Naive thymus-derived CD4-positive, alpha-beta T cell (primary cell): ENCODE measurements at regions of chr2 and their contacts with region 1.

Region 1: DNA sequence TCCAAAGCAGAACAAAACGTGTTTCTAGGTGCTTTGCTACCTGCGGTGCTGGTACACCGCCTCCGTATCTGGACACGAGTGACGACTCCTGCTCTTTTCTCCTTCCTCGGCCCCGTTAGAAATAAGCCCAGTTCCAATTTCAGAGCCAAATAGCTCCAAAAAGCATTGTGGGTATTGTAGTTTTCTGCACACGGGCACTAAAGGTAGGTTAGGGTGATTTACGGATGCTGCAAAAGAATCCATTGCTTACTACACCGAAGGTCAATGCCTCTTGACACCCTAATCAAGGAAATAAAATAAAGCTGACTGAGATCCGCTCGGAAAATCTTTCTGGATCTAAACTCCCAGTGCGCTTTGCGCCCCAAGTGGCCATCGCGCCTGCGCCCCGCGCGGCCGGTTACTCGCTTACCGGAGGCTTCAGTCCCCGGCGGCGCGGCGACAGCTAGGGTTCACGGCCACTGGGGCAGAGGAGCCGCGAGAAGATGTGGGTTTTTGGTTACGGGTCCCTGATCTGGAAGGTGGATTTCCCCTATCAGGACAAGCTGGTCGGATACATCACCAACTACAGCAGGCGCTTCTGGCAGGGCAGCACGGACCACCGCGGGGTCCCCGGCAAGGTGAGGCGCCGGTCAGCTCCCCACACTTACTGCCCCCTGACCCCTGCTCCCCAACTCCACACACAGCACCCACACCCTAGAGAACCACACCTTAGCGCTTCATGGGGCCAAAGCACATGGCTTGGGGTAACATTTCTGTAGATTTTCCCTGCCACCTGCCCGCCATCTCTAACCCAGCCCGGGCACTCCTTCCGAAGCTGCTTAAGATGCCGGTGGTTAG is at the start of gene CHAC2:
- DNase-seq: peak; percentile 74 to 86 (median 84)
- ATAC-seq: peak; percentile 93
- H3K4me3 ChIP-seq: peak within 1 kb of the TSS; percentile 80
- H3K4me3 Mint-ChIP-seq: peak within 1 kb of the TSS; percentile 88 to 98 (median 92)
- H3K27ac ChIP-seq: peak within 1 kb of the TSS; percentile 86
- H3K27ac Mint-ChIP-seq: peak within 1 kb of the TSS; percentile 60 to 99 (median 90)
- H3K4me1 ChIP-seq: peaks cover 0 to 8% of the 10 kb centered on the region in 2 donors
- H3K4me1 Mint-ChIP-seq: peaks cover 7 to 41% (median 33%) of the 10 kb centered on the region in 7 donors
- H3K27me3 ChIP-seq: no peaks in the 10 kb centered on the region
- H3K27me3 Mint-ChIP-seq: no peaks in the 10 kb centered on the region
- total RNA-seq, gene CHAC2: 0.29 to 12.1 (median 1.2) TPM

Region 2: GRCh38 chr2:52356556-52356955 is 1411.1 kb before region 1 on chr2:
- CTCF ChIA-PET with region 1: no interaction called
- POLR2A ChIA-PET with region 1: no interaction called
- intact Hi-C with region 1: no loop called
- DNase-seq: no peak
- ATAC-seq: no peak
- H3K4me3 ChIP-seq: no peak overlapping the region
- H3K4me3 Mint-ChIP-seq: no peak overlapping the region
- H3K27ac ChIP-seq: no peak overlapping the region
- H3K27ac Mint-ChIP-seq: no peak overlapping the region
- H3K4me1 ChIP-seq: no peaks in the 10 kb centered on the region
- H3K4me1 Mint-ChIP-seq: no peaks in the 10 kb centered on the region
- H3K27me3 ChIP-seq: no peaks in the 10 kb centered on the region
- H3K27me3 Mint-ChIP-seq: no peaks in the 10 kb centered on the region

Region 3: DNA sequence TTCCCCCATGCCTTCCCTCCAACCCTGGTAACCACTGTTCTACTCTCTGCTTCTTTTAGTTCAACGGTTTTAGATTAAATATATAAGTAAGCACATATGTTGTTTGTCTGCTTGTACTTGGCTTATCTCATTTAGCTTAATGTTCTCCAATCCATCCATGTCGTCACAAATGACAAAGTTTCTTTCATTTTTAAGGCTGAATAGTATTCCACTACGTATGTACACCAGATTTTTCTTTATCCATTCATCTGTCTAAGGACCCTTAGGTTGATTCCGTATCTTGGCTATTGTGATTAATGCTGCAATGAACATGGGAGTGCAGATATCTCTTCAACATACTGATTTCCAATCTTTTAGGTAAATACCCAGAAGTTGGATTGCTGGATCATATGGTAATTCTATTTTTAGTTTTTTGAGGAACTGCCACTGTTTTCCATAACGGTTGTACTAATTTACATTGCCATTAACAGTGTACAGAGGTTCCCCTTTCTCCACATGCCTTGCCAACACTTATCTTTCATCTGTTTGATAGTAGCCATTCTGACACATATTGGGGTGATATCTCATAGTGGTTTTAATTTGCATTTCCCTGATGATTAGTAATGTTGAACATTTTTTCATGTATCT is 11.0 kb after region 1 on chr2:
- CTCF ChIA-PET with region 1: no interaction called
- POLR2A ChIA-PET with region 1: interaction called, 59 read pairs
- intact Hi-C with region 1: no loop called
- DNase-seq: no peak
- ATAC-seq: peak; percentile 55
- H3K4me3 ChIP-seq: no peak overlapping the region
- H3K4me3 Mint-ChIP-seq: no peak overlapping the region
- H3K27ac ChIP-seq: no peak overlapping the region
- H3K27ac Mint-ChIP-seq: peak overlapping the region in 2 of 9 donors; percentile 54 to 71
- H3K4me1 ChIP-seq: no peaks in the 10 kb centered on the region
- H3K4me1 Mint-ChIP-seq: peaks cover 22 to 53% (median 39%) of the 10 kb centered on the region in 7 donors
- H3K27me3 ChIP-seq: no peaks in the 10 kb centered on the region
- H3K27me3 Mint-ChIP-seq: no peaks in the 10 kb centered on the region

Region 4: DNA sequence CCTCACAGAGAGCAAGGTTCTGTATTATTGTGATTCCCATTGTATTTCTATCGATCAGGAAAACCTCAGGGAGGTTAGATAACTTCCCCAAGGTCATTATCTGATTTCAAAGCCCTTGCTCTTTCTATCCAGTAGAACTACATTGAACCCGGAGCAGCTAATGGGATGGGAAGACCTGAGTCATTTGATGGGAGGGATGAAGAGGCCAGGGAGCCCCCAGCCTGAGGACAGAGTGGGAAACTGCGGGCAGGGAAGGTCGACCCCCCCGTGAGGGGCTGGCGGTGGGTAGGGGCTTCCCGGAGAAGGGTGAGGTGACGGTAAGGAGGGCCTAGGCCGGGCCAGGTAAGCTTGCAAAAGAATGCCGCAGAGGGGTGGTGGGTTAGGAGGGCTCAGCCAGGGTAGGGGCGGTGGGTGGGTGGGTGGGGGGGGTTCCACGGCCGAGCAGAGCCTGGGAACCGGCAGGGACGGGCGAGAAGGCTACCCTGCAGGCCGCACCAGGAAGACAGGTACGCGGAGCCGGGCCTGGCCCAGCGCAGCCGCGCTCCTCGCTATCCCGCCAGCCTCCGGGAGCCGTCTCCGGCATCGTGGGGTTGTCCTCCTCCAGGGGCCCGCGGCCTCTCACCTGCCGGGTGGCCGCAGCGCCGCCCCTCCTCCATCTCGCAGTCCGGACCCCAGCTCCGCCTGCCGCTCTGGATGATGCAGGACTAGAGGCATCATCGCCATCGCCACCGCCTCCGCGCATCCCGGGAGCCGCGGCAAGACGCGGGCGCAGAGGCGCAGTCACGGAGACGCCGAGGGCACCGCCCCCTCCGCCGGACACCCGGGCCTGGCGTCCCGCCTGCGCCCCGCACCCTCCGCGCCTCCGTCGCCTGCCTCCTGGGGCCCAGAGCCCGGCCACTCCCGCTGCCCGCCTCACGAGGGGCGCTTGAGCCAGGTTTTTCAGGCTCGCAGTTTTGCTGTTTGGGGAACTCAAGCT is 91.9 kb after region 1 on chr2 and contains the start of gene GPR75:
- CTCF ChIA-PET with region 1: no interaction called
- POLR2A ChIA-PET with region 1: no interaction called
- intact Hi-C with region 1: no loop called
- DNase-seq: no peak
- ATAC-seq: no peak
- H3K4me3 ChIP-seq: no peak within 1 kb of the TSS
- H3K4me3 Mint-ChIP-seq: no peak within 1 kb of the TSS
- H3K27ac ChIP-seq: no peak within 1 kb of the TSS
- H3K27ac Mint-ChIP-seq: peak within 1 kb of the TSS in 2 of 9 donors; percentile 43 to 72
- H3K4me1 ChIP-seq: peaks cover 0 to 15% of the 10 kb centered on the region in 2 donors
- H3K4me1 Mint-ChIP-seq: peaks cover 6 to 25% (median 18%) of the 10 kb centered on the region in 7 donors
- H3K27me3 ChIP-seq: no peaks in the 10 kb centered on the region
- H3K27me3 Mint-ChIP-seq: no peaks in the 10 kb centered on the region
- total RNA-seq, gene GPR75: 2.9 to 5.0 (median 3.1) TPM